ENCODE measurements at regions of chr11 and their contacts with region 1.

Region 1: GRCh38 chr11:85647604-85648299 is at the start of gene TMEM126A:
- DNase-seq: peak; percentile 90 to 95
- H3K4me3 ChIP-seq: peak within 1 kb of the TSS; percentile 72
- H3K27ac ChIP-seq: peak within 1 kb of the TSS; percentile 76
- H3K4me1 ChIP-seq: peaks cover 24% of the 10 kb centered on the region
- H3K27me3 ChIP-seq: no peaks in the 10 kb centered on the region
- CTCF ChIP-seq: no peak
- total RNA-seq, gene TMEM126A: 17.7 and 26.3 TPM in 2 replicates

Region 2: GRCh38 chr11:85123752-85124231 is 524.0 kb before region 1 on chr11:
- CTCF ChIA-PET with region 1: no interaction called
- POLR2A ChIA-PET with region 1: interaction called, 10 read pairs
- intact Hi-C with region 1: no loop called
- DNase-seq: no peak
- H3K4me3 ChIP-seq: no peak overlapping the region
- H3K27ac ChIP-seq: no peak overlapping the region
- H3K4me1 ChIP-seq: no peaks in the 10 kb centered on the region
- H3K27me3 ChIP-seq: no peaks in the 10 kb centered on the region
- CTCF ChIP-seq: no peak

Region 3: DNA sequence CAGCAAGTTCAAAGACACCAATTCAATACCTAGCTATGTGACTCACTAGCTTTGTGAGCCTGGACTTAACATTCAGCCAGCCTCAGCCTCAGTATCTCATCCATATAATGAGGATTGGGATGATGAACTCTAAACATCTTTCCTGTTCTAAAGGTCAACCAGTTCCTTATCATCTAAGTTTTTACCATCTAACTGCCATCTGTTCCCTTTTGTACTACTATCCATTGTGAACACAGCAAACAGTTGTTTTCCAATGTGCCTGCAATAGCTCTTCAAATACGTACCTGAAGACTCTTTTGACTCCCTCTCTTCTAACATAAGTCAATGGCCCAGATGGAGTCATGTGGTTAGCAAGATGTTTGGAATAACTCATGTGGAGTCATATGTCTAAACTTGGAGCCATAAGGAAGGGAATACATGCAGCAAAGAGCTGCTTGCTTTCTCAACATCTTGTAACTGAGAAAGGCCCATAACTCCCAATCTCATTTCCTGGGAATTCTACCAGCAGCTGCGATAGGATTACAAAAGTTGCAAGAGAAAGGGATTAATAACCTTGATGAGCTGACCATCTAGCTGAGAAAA is 143.7 kb after region 1 on chr11:
- CTCF ChIA-PET with region 1: no interaction called
- POLR2A ChIA-PET with region 1: no interaction called
- intact Hi-C with region 1: no loop called
- DNase-seq: no peak
- H3K4me3 ChIP-seq: no peak overlapping the region
- H3K27ac ChIP-seq: no peak overlapping the region
- H3K4me1 ChIP-seq: peaks cover 58% of the 10 kb centered on the region
- H3K27me3 ChIP-seq: no peaks in the 10 kb centered on the region
- CTCF ChIP-seq: no peak